Common myeloid progenitor, CD34-positive (primary cell): ENCODE measurements at regions of chr9 and their contacts with region 1.

Region 1: GRCh38 chr9:21110708-21111576 is 30.7 kb downstream of the IFNW1 start:
- DNase-seq: peak; percentile 83 to 89 (median 85)
- H3K4me3 ChIP-seq: no peak overlapping the region
- H3K27ac ChIP-seq: no peak overlapping the region
- H3K4me1 ChIP-seq: peaks cover 0 to 2% (median 0%) of the 10 kb centered on the region in 4 experiments
- H3K27me3 ChIP-seq: no peaks in the 10 kb centered on the region

Region 2: DNA sequence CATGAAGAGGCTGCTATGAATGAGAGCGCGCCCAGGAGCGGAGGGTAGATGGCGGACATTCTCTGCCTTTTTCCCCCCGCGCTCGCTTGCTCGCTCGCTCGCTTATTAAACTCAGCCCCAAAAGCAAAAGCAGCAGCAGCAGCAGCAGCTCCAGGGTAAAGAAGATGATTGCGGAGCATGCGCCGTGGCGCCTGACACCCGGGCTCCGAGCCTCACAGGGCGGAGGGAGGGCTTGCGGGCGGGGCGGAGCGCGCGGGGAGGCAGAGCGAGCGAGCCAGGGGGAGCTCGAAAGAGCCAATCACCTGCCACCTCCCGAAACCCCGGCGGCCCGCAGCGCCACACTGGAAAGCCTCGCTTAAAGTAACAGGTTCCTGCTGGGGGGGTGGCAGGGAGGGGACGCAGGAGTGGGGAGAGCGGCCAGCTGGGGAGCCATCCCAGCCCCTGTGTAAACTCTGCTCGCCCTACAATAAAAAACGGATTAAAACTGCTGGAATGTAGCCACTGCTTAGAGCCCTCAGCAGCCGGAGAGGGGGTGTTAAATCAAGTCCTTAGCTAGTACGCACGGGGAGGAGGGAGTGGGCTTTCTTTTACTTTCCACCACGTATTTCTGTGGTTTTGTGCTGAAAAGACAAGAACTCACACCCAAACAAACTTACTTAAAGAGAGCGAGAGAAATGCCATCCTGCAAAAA is 488.5 kb before region 1 on chr9 and contains the start of gene MLLT3:
- CTCF ChIA-PET with region 1: interaction called, 11 read pairs
- POLR2A ChIA-PET with region 1: no interaction called
- DNase-seq: peak; percentile 96 to 97 (median 97)
- H3K4me3 ChIP-seq: peak within 1 kb of the TSS; percentile 84 to 99 (median 97)
- H3K27ac ChIP-seq: peak within 1 kb of the TSS in 1 of 2 experiments; percentile 73
- H3K4me1 ChIP-seq: peaks cover 11 to 41% (median 33%) of the 10 kb centered on the region in 4 experiments
- H3K27me3 ChIP-seq: no peaks in the 10 kb centered on the region

Region 3: DNA sequence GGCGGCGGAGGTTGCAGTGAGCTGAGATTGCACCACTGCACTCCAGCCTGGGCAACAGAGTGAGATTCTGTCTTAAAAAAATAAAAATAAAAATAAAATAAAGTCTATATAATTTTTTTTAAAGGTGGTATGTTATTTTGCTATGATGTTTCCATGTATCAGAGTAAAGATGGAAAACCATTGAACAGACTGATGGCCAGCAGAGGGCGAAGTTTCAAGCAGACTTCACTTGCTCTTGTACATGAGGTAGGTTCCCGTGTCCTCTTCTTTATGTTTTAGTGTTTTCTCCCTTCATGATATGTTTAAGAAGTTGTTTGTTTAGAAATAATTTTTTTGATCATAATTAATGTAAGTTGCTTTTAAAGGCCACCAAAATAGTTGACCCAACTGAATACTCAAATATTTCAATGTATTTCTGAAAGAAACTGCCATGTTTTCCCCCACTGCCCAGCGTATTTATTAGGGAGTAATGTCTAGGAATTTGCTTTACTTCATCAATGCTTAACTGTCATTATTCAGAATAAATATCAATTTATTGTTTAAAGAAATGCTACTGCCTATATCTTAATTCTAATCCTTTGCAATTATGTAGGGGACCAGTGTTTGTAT is 225.9 kb before region 1 on chr9:
- CTCF ChIA-PET with region 1: interaction called, 70 read pairs
- POLR2A ChIA-PET with region 1: no interaction called
- DNase-seq: peak; percentile 69 to 88 (median 86)
- H3K4me3 ChIP-seq: no peak overlapping the region
- H3K27ac ChIP-seq: no peak overlapping the region
- H3K4me1 ChIP-seq: peaks cover 0 to 6% (median 2%) of the 10 kb centered on the region in 4 experiments
- H3K27me3 ChIP-seq: no peaks in the 10 kb centered on the region

Region 4: GRCh38 chr9:20941174-20941690 is 169.7 kb before region 1 on chr9:
- CTCF ChIA-PET with region 1: interaction called, 16 read pairs
- POLR2A ChIA-PET with region 1: no interaction called
- DNase-seq: peak; percentile 72 to 84 (median 82)
- H3K4me3 ChIP-seq: peak overlapping the region in 2 of 7 experiments; percentile 11 to 62
- H3K27ac ChIP-seq: no peak overlapping the region
- H3K4me1 ChIP-seq: peaks cover 0 to 4% (median 0%) of the 10 kb centered on the region in 4 experiments
- H3K27me3 ChIP-seq: no peaks in the 10 kb centered on the region

Region 5: DNA sequence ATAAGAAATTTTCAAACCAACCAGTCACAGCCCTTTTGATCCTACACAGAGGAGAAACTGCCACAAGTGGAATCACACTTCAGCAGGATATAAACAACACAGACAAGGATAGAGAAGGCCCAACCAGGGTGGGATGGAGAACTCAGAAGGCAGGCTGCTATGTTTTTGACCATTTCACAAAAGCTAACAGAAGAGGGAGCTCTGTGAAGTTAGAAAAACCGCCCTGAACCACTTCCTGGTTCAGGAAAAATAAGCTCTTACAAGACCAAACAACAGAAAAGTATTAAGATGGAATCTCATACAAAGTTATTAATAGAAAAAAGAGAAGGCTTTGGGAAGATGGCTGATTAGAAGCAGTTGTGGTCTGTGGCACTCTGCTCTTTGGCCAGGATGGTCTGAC is 32.2 kb before region 1 on chr9:
- CTCF ChIA-PET with region 1: interaction called, 35 read pairs
- POLR2A ChIA-PET with region 1: no interaction called
- DNase-seq: no peak
- H3K4me3 ChIP-seq: no peak overlapping the region
- H3K27ac ChIP-seq: no peak overlapping the region
- H3K4me1 ChIP-seq: peaks cover 16 to 28% (median 18%) of the 10 kb centered on the region in 4 experiments
- H3K27me3 ChIP-seq: no peaks in the 10 kb centered on the region

Region 6: GRCh38 chr9:21096172-21096900 is 14.6 kb before region 1 on chr9:
- CTCF ChIA-PET with region 1: interaction called, 15 read pairs
- POLR2A ChIA-PET with region 1: interaction called, 3 read pairs
- DNase-seq: peak; percentile 91 to 98 (median 97)
- H3K4me3 ChIP-seq: peak overlapping the region in 6 of 7 experiments; percentile 24 to 62 (median 38)
- H3K27ac ChIP-seq: peak overlapping the region; percentile 52 to 81
- H3K4me1 ChIP-seq: peaks cover 9 to 27% (median 23%) of the 10 kb centered on the region in 4 experiments
- H3K27me3 ChIP-seq: no peaks in the 10 kb centered on the region

Region 7: DNA sequence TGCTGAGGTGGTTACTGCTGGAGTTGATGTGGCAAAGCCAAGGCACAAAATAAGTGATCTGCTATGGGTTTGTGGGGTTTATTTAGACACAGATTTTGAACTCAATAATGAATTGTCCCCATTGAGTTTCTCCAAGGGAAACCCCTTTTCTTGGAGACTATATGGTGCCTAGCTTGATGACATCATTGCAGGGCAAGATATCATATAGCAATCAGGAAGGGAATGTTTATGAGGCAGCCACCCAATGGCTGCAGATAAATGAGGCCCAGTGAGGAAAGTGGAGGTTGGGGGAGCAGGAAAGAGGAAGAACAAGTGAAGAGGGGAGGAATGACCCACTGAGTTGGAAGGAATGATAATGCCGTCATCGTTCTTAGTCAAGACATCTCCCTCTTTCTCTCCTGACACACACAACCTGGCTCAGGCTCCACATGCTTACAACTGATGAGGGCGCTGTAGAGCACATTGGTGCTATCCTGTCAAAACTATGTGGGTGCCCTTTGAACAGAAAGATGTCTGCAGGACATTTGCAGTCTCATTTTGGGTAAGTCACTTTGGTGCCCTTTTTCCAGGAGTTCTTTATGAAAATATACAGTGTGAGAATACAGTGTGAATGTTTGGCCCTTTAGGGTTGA is 24.7 kb after region 1 on chr9:
- CTCF ChIA-PET with region 1: no interaction called
- POLR2A ChIA-PET with region 1: no interaction called
- DNase-seq: no peak
- H3K4me3 ChIP-seq: no peak overlapping the region
- H3K27ac ChIP-seq: no peak overlapping the region
- H3K4me1 ChIP-seq: peaks cover 0 to 2% (median 1%) of the 10 kb centered on the region in 4 experiments
- H3K27me3 ChIP-seq: no peaks in the 10 kb centered on the region